Pancreas (tissue), 10 donors: ENCODE measurements at regions of chrX and their contacts with region 1.

Region 1: GRCh38 chrX:107659768-107660167 is 31.5 kb downstream of the PRPS1 start:
- DNase-seq: peak in 1 of 6 donors; percentile 35
- ATAC-seq: peak; percentile 74 to 88 (median 82)
- H3K4me3 ChIP-seq: no peak overlapping the region
- H3K27ac ChIP-seq: no peak overlapping the region
- H3K4me1 ChIP-seq: no peaks in the 10 kb centered on the region
- H3K27me3 ChIP-seq: no peaks in the 10 kb centered on the region
- CTCF ChIP-seq: peak; percentile 32 to 59 (median 44)

Region 2: DNA sequence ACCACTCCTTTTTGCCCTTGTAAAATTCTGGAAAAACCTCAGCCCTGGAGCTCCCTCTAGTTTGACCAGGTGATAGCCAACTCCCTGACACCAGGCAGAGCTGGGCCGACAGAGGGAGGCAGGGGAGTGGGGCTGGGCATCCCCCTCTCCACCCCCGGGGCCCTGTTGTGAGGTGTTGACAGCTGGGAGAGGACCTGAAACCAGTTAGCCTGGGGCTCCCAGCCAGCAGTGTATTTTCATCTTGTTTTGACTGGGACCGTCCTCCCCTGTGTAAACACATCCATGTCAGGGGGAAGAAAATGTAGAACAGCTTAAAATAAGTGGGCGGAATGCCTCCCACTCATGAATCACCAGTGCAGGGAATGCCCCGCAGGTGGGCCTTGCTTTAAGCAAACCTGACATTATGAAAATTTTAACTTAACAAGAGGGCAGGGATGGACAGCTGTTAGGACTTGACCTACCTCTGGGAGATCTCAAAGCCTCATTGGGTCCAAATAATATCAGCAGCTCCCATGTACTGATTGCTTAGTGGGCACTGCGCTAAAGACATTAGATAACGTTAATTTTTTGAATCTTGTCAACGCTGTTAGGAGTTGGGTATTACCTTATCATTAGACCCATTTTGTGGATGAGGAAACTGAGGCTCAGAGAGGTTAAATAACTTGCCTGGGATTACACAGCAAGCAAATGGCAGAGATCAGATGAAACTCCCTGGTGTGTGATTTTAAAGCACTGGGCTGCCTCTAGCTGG is 70.0 kb after region 1 on chrX:
- intact Hi-C with region 1: loop called in 1 of 3 experiments (anchors 10 kb)
- DNase-seq: peak in 2 of 6 donors; percentile 51 to 62
- ATAC-seq: peak in 2 of 4 donors; percentile 13 to 21
- H3K4me3 ChIP-seq: no peak overlapping the region
- H3K27ac ChIP-seq: peak overlapping the region in 2 of 4 donors; percentile 53 to 77
- H3K4me1 ChIP-seq: peaks cover 24 to 48% (median 32%) of the 10 kb centered on the region in 3 donors
- H3K27me3 ChIP-seq: peaks cover 0 to 4% (median 0%) of the 10 kb centered on the region in 4 donors
- CTCF ChIP-seq: no peak

Region 3: DNA sequence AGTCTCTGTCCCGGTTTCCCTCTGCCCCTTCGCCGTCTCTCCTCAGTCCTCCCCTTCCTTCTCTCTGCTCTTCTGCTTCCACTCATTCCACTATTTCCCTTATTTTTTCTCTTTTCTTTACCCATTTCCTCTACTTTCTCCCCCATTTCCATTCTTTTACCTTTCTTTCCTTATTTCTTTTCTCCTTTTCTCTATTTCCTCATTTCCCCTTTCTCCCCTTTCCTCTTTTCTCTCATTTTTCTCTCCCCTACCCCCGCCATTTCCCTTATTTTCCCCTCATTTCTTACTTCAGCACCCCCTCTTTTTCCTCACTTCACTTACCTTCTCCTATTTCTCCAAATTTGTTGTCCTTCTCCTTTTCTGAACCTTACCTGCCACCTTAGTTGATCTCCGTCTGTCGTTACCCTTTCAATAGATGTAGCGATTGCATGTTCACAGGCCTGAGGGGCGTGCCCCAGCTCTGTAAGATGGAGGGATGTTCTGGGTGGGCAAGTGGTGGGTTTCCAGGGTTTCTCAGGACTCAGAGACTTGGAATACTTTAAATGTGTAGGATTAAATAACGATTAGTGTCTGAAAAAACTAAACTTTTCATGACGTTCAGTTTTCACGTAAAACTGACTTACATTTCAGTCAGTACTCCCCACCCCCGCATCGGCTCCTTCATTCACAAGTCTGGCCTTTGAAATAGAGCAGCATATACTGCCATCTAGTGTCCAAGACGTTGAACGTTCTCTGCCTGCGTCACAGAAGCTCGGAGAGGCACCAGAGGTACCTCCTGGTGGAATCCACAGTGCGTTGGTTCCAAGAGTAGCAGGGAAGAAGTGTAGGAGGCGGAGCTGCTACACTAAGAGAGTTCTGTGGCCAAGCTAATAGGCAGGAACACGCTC is 117.1 kb after region 1 on chrX:
- intact Hi-C with region 1: loop called in 1 of 3 experiments (anchors 5 kb)
- DNase-seq: peak in 5 of 6 donors; percentile 70 to 84 (median 78)
- ATAC-seq: peak; percentile 55 to 84 (median 73)
- H3K4me3 ChIP-seq: peak overlapping the region in 2 of 4 donors; percentile 49 to 54
- H3K27ac ChIP-seq: peak overlapping the region in 2 of 4 donors; percentile 5 to 73
- H3K4me1 ChIP-seq: no peaks in the 10 kb centered on the region
- H3K27me3 ChIP-seq: peaks cover 0 to 8% (median 0%) of the 10 kb centered on the region in 4 donors
- CTCF ChIP-seq: peak; percentile 73 to 82 (median 78)

Region 4: GRCh38 chrX:107894038-107894437 is 234.3 kb after region 1 on chrX:
- intact Hi-C with region 1: loop called in 1 of 3 experiments (anchors 5 kb)
- DNase-seq: peak in 1 of 6 donors; percentile 34
- ATAC-seq: peak; percentile 72 to 84 (median 81)
- H3K4me3 ChIP-seq: no peak overlapping the region
- H3K27ac ChIP-seq: no peak overlapping the region
- H3K4me1 ChIP-seq: no peaks in the 10 kb centered on the region
- H3K27me3 ChIP-seq: peaks cover 0 to 6% (median 0%) of the 10 kb centered on the region in 4 donors
- CTCF ChIP-seq: peak; percentile 23 to 62 (median 42)

Region 5: GRCh38 chrX:108117988-108118387 is 458.2 kb after region 1 on chrX:
- intact Hi-C with region 1: no loop called
- DNase-seq: no peak
- ATAC-seq: no peak
- H3K4me3 ChIP-seq: no peak overlapping the region
- H3K27ac ChIP-seq: no peak overlapping the region
- H3K4me1 ChIP-seq: no peaks in the 10 kb centered on the region
- H3K27me3 ChIP-seq: peaks cover 0 to 3% (median 0%) of the 10 kb centered on the region in 4 donors
- CTCF ChIP-seq: no peak